ENCODE measurements at regions of chr15 and their contacts with region 1.

Region 1: GRCh38 chr15:60520825-60521368 is 42.0 kb upstream of the ICE2 start:
- DNase-seq: peak; percentile 91
- H3K4me3 Mint-ChIP-seq: no peak overlapping the region
- H3K27ac Mint-ChIP-seq: peak overlapping the region; percentile 42
- H3K4me1 Mint-ChIP-seq: peaks cover 42% of the 10 kb centered on the region
- H3K27me3 Mint-ChIP-seq: no peaks in the 10 kb centered on the region

Region 2: GRCh38 chr15:60208709-60209108 is 312.2 kb before region 1 on chr15:
- CTCF ChIA-PET with region 1: no interaction called
- intact Hi-C with region 1: no loop called
- DNase-seq: no peak
- H3K4me3 Mint-ChIP-seq: no peak overlapping the region
- H3K27ac Mint-ChIP-seq: no peak overlapping the region
- H3K4me1 Mint-ChIP-seq: no peaks in the 10 kb centered on the region
- H3K27me3 Mint-ChIP-seq: peaks cover 23% of the 10 kb centered on the region

Region 3: GRCh38 chr15:60362321-60363086 is 158.4 kb before region 1 on chr15:
- CTCF ChIA-PET with region 1: interaction called, 19 read pairs
- intact Hi-C with region 1: loop called (anchors 1 kb)
- DNase-seq: peak; percentile 61
- H3K4me3 Mint-ChIP-seq: no peak overlapping the region
- H3K27ac Mint-ChIP-seq: no peak overlapping the region
- H3K4me1 Mint-ChIP-seq: peaks cover 12% of the 10 kb centered on the region
- H3K27me3 Mint-ChIP-seq: no peaks in the 10 kb centered on the region

Region 4: GRCh38 chr15:60541481-60542299 is 20.8 kb after region 1 on chr15:
- CTCF ChIA-PET with region 1: interaction called, 15 read pairs
- intact Hi-C with region 1: no loop called
- DNase-seq: no peak
- H3K4me3 Mint-ChIP-seq: no peak overlapping the region
- H3K27ac Mint-ChIP-seq: no peak overlapping the region
- H3K4me1 Mint-ChIP-seq: peaks cover 91% of the 10 kb centered on the region
- H3K27me3 Mint-ChIP-seq: no peaks in the 10 kb centered on the region

Region 5: DNA sequence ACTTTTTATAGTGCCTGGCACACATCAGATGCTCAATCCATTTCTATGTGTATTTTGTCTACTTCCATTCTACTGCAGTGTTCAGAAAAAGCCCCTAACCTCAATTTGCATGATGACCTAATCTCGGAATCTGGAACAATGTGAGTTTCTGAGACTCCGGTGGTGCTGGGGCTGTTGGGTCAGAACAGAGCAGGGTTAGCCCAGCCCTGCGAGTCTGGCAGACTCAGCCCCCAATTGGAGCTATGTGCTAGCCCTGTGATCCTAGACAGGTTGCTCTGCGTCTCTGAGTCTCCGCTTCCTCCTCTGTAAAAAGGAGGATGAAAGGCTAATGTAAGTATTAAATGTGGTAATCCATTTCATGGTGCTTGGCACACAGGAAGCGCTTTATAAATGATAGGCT is 53.0 kb after region 1 on chr15:
- CTCF ChIA-PET with region 1: interaction called, 16 read pairs
- intact Hi-C with region 1: no loop called
- DNase-seq: peak; percentile 64
- H3K4me3 Mint-ChIP-seq: peak overlapping the region; percentile 41
- H3K27ac Mint-ChIP-seq: peak overlapping the region; percentile 60
- H3K4me1 Mint-ChIP-seq: peaks cover 89% of the 10 kb centered on the region
- H3K27me3 Mint-ChIP-seq: no peaks in the 10 kb centered on the region

Region 6: DNA sequence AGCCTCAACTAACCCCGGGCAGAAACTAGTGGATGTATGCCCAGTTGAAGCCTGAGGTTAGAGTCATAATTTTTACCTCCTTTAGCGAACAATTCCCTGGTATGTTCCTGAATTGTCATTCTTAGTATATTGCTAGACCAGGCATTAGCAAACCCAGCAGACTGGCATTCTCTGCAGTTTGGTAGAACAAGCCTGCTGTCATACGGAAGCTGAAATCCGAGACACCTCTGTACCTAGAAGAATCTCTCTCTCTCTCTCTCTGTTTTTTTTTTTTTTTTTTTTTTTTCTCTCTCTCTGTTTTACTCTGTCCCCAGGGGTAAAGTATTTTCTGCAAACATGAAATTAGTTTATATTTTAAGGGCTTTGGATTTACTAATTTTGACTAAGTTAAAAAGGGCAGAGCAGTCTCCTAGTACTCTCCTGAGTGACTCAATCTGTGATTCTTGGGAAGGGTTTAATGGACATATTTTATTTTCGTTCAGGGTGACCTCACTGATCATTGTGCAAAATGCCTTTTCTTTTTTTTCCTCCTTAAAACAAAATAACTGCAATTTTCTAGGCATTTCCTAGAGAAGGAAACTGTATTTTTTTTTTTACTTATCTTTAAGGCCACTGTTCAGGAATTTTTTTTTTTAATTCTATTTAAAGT is 91.6 kb after region 1 on chr15:
- CTCF ChIA-PET with region 1: no interaction called
- intact Hi-C with region 1: no loop called
- DNase-seq: no peak
- H3K4me3 Mint-ChIP-seq: no peak overlapping the region
- H3K27ac Mint-ChIP-seq: no peak overlapping the region
- H3K4me1 Mint-ChIP-seq: peaks cover 8% of the 10 kb centered on the region
- H3K27me3 Mint-ChIP-seq: peaks cover 7% of the 10 kb centered on the region

Region 7: DNA sequence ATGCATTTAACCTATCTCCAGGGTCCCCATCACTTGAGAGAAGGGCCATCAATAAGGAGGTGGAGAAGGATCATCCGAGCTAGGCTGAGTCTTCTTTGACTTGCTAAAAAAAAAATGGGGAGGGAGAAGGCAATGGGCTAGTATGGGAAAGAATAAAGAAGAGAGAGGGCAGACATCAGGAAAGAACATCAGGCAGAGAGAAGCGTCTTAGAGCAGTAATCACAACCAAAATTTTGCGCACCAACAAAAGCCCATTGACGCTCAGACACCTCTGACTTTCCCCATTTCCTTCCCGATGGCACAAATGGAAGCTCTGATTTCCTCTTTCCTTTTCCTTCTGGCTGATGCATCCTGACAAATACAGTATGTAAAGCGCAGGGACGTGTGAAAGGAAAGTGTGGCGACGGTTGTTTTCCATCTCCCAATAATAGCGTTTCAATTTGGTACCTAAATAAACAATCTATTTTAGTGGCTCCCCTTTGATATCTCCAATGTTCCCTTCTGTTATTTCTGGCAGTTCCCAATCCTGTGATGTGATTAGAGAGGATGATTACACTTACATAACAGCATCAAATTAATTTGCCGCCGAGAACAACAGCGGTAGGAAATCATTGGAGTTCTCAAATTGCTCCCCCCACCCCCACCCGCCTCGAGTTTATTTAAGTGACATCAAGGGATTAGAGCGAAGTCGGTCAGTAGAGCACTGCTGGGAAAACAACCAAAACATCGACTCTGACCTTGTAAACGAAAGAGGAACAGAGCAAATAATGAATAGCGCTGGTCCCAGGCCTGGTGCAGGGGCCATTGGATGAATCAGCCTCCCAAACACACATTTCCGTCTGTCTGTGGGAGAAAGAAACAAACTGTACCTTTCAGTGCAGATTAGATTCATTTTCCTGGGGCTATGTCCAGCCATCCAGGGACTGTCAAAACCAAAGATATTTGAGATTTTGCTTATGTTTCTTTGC is 231.4 kb after region 1 on chr15:
- CTCF ChIA-PET with region 1: no interaction called
- intact Hi-C with region 1: no loop called
- DNase-seq: no peak
- H3K4me3 Mint-ChIP-seq: no peak overlapping the region
- H3K27ac Mint-ChIP-seq: no peak overlapping the region
- H3K4me1 Mint-ChIP-seq: no peaks in the 10 kb centered on the region
- H3K27me3 Mint-ChIP-seq: no peaks in the 10 kb centered on the region

Region 8: DNA sequence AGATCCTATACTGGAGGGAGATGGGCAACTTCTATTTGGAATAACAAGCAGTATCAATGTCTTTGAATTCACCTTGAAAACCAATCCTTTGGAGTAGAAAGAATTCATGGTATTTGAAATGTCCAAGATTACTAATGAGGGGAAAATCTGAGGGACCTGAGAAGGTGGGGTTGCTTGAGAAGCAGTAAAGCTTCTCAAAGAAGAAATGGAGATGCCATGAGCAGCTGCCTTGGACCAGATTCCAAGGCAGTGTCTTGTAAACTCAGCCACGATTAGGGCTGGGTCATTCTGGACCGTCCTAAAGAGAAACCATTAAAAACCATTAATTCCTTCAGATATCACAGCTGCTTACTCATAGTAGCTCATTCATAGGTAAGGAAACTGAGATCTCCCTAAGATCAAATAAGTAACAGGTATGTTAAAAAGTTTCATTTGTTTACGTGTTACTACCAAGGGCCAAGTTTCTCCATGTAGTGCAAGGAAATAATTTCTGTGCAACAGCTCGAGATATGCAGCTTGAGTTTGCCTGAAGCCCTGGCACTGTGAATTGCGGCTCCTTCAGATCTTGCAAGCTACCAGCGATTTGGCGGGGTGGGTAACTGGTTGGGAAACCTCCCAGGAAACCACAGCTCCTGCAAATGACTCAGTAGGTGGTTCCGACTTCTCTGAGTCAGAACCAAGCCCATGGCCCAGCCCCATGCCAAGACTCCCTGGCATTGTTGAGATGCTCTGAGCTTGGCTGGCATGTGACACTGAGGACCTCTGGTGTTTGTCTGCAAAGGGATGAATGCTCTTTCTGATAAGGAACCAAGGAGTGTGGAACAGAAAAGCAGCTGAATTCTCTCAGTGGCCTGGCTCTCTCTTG is 411.4 kb after region 1 on chr15:
- CTCF ChIA-PET with region 1: interaction called, 10 read pairs
- intact Hi-C with region 1: no loop called
- DNase-seq: peak; percentile 71
- H3K4me3 Mint-ChIP-seq: no peak overlapping the region
- H3K27ac Mint-ChIP-seq: no peak overlapping the region
- H3K4me1 Mint-ChIP-seq: peaks cover 12% of the 10 kb centered on the region
- H3K27me3 Mint-ChIP-seq: peaks cover 10% of the 10 kb centered on the region

Measured in activated naive CD4-positive, alpha-beta T cell treated with anti-CD3 and anti-CD28 coated beads for 36 hours (primary cell).